PC-3 (cell line): ENCODE measurements at regions of chr7 and their contacts with region 1.

Region 1: DNA sequence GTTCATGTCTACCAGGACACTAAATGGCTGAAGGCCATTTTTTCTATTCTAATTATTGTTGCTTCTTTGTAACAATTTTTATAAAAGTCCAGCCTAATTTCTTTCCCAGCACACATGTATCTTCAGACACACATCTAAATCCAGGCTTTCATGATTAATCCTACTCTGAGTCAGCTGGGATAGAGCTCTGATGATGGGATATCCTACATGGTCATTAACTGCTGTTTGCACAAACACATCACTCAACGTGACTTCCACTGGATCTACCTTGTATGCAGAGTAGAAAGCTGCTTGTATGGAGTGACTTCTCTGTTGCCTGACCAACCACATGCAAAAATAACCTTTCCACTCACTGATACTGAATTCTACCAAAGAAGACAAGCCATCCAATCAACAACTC is 260.9 kb downstream of the AHR start:
- DNase-seq: peak; percentile 85
- ATAC-seq: peak; percentile 60
- H3K4me3 ChIP-seq: peak overlapping the region; percentile 48
- H3K27ac ChIP-seq: peak overlapping the region; percentile 99
- H3K4me1 ChIP-seq: peaks cover 49% of the 10 kb centered on the region
- H3K27me3 ChIP-seq: no peaks in the 10 kb centered on the region
- CTCF ChIP-seq: no peak

Region 2: DNA sequence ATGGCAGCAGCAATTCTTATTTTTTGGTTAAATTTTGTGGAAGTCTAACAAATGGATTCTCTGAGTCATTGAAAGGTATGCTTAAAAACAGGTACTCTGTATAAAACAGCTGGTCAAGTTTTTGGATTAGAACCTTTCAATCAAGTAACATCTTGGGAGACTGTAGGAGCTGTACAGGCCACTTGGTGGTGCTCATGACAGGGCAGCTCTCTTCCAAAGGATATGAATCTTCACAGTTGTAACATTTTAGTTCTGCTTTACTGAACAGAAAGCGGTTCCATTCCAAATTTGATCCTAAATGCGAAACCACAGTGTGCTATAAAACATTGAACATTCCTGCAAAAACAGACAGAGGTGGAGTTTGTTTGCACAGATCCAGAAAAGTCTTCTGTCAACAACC is 633.1 kb before region 1 on chr7:
- CTCF ChIA-PET with region 1: no interaction called
- POLR2A ChIA-PET with region 1: no interaction called
- intact Hi-C with region 1: loop called (anchors 1 kb)
- DNase-seq: peak; percentile 78
- ATAC-seq: peak; percentile 57
- H3K4me3 ChIP-seq: 0 out of 2 replicates have a peak overlapping the region, but pooled peaks have one; percentile 19
- H3K27ac ChIP-seq: peak overlapping the region; percentile 87
- H3K4me1 ChIP-seq: peaks cover 64% of the 10 kb centered on the region
- H3K27me3 ChIP-seq: no peaks in the 10 kb centered on the region
- CTCF ChIP-seq: peak; percentile 83

Region 3: DNA sequence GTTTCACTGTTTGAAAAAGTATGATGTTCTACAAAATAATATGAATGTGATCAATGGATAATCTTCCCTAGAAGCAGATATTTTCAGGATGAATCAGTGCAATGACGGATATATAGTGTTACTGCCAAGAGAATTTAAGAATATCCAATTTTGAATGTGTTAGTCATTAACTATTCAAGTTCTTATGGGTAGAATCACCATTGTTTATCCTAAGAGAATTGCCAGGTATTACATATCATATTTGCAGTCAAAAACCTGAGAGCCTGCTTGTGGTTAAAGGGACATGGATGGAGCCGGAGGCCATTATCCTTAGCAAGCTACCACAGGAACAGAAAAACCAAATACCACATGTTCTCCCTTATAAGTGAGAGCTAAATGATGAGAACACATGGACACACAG is 234.0 kb before region 1 on chr7:
- CTCF ChIA-PET with region 1: no interaction called
- POLR2A ChIA-PET with region 1: no interaction called
- intact Hi-C with region 1: loop called (anchors 1 kb)
- DNase-seq: peak; percentile 89
- ATAC-seq: peak; percentile 76
- H3K4me3 ChIP-seq: no peak overlapping the region
- H3K27ac ChIP-seq: peak overlapping the region; percentile 67
- H3K4me1 ChIP-seq: peaks cover 23% of the 10 kb centered on the region
- H3K27me3 ChIP-seq: no peaks in the 10 kb centered on the region
- CTCF ChIP-seq: no peak

Region 4: GRCh38 chr7:17434841-17435692 is 124.3 kb before region 1 on chr7:
- CTCF ChIA-PET with region 1: no interaction called
- POLR2A ChIA-PET with region 1: no interaction called
- intact Hi-C with region 1: loop called (anchors 2 kb)
- DNase-seq: peak; percentile 5
- ATAC-seq: peak; percentile 58
- H3K4me3 ChIP-seq: no peak overlapping the region
- H3K27ac ChIP-seq: no peak overlapping the region
- H3K4me1 ChIP-seq: peaks cover 9% of the 10 kb centered on the region; the same call in 1 of the 2 replicates
- H3K27me3 ChIP-seq: no peaks in the 10 kb centered on the region
- CTCF ChIP-seq: no peak

Region 5: DNA sequence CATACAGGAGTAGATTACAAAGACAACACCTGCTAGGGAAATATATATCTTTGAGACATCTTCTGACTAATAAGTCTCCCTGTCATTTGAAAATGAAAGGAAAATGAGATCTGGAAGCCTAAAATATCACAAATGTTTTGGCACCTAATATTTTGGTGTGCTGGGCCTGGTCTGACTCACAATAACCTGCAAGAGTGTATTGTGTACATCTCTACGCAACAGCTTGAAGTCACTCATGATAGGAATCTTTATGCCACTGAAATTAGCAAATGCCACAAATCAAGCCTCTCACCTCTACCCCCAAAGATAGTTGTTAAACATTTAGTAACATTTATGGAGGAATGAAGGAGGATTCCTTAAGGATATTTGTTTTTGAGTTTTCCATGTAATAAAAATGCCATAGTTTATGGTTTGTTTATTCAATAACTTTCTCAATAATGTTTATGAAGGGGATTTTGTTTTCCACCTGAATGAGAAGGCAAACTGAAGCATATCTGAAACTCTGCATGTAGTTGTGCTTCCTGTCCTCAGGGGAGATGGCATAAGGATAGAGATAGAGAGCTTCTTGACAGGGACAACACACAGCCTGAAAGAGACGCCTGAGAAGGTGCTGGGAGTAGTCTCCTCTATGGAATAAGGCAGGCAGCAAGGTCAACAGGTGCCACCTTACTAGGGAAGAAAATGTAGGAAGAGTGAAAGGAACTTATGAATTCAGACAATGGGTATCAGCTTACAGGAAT is 63.6 kb before region 1 on chr7:
- CTCF ChIA-PET with region 1: no interaction called
- POLR2A ChIA-PET with region 1: no interaction called
- intact Hi-C with region 1: loop called (anchors 1 kb)
- DNase-seq: peak; percentile 54
- ATAC-seq: peak; percentile 86
- H3K4me3 ChIP-seq: no peak overlapping the region
- H3K27ac ChIP-seq: peak overlapping the region; percentile 36
- H3K4me1 ChIP-seq: peaks cover 15% of the 10 kb centered on the region
- H3K27me3 ChIP-seq: no peaks in the 10 kb centered on the region
- CTCF ChIP-seq: no peak

Region 6: GRCh38 chr7:17599733-17600685 is 40.6 kb after region 1 on chr7:
- CTCF ChIA-PET with region 1: no interaction called
- POLR2A ChIA-PET with region 1: interaction called, 3 read pairs
- intact Hi-C with region 1: loop called (anchors 1 kb)
- DNase-seq: peak; percentile 95
- ATAC-seq: peak; percentile 81
- H3K4me3 ChIP-seq: peak overlapping the region; percentile 36; the same call in 1 of the 2 replicates
- H3K27ac ChIP-seq: peak overlapping the region; percentile 95
- H3K4me1 ChIP-seq: peaks cover 42% of the 10 kb centered on the region
- H3K27me3 ChIP-seq: no peaks in the 10 kb centered on the region
- CTCF ChIP-seq: no peak

Region 7: DNA sequence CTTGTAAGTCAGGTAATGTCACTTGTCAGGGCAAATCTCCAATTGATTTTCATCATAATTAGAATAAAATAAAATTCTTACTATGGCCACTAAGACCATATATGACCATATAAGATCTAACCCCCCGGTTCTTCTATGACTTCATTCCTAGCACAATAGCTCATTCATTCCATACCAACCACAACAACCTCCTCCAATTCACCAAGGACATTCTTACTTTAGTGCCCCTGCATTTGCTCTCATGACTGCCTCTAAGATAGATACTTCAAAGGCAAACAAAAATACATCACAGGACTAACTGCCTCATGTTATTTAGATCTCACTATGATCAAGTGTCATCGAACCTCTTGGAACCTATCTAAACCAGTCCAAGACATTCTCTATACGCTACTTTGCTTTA is 290.1 kb after region 1 on chr7:
- CTCF ChIA-PET with region 1: no interaction called
- POLR2A ChIA-PET with region 1: no interaction called
- intact Hi-C with region 1: no loop called
- DNase-seq: no peak
- ATAC-seq: no peak
- H3K4me3 ChIP-seq: no peak overlapping the region
- H3K27ac ChIP-seq: no peak overlapping the region
- H3K4me1 ChIP-seq: peaks cover 7% of the 10 kb centered on the region
- H3K27me3 ChIP-seq: no peaks in the 10 kb centered on the region
- CTCF ChIP-seq: no peak